ENCODE measurements at regions of chr5 and their contacts with region 1.

Region 1: DNA sequence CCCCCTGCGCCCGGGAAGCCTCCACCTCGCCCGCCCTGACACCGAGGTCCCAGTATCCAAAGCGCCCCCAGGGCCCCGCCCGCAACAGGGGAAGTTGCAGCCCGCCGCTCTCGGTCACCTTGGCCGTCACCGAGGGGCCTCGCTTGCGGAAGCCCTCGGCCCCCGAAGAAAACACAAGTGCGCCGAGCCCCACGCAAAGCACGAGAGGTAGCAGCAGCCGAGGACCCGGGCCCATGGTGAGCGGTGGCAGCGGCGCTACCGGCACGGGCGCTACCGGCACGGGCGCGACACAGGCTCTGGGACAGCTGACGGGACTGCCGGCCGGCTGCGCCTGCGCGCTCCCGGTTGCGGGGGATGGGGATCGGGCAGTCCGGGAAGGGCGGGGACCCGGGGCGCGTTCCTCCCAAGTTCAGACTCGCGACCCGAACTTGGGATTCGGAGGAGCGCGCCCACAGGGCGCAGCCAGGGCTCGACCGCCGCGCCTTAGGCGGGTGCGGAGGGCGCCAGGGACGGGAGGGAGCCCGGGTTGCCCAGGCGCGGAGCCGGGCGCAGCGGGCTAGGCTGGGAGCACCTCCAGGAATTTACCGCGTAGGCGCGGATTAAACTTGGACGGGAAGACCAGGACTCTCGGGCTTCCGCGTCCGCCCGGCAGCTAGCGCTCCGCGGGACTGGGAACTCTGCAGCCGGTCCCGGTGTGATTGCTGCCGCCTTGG is at the start of gene PPIC:
- DNase-seq: peak; percentile 88
- H3K4me3 ChIP-seq: peak within 1 kb of the TSS; percentile 91
- H3K27ac ChIP-seq: peak within 1 kb of the TSS; percentile 70
- H3K4me1 ChIP-seq: peaks cover 7% of the 10 kb centered on the region; the same call in 1 of the 2 replicates
- H3K27me3 ChIP-seq: no peaks in the 10 kb centered on the region
- total RNA-seq, gene PPIC: 116 and 128 TPM in 2 replicates

Region 2: GRCh38 chr5:123157791-123158581 is 121.4 kb after region 1 on chr5:
- in situ Hi-C with region 1: loop called (anchors 10 kb)
- DNase-seq: peak; percentile 63
- H3K4me3 ChIP-seq: peak overlapping the region; percentile 56
- H3K27ac ChIP-seq: no peak overlapping the region
- H3K4me1 ChIP-seq: peaks cover 21% of the 10 kb centered on the region
- H3K27me3 ChIP-seq: peaks cover 24% of the 10 kb centered on the region; the same call in 1 of the 2 replicates

Region 3: DNA sequence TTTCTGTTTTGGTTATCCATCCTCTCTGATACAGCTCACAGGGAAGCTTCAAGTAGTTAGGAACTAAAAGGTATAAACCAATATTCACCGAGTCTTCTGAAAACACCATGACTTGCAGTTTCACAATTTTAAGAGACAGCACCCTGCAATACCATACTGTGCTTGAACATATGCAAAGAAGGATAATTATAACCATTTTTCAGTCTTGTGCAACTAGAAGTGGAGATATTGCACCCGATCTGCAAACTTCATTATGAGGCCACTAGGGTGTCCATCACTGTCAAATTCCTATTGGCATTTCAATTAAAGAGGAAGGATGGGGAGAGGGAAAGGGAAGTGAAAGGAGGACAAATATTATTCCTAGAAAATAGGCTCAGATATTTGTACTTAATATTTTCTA is 419.1 kb after region 1 on chr5:
- in situ Hi-C with region 1: no loop called
- DNase-seq: no peak
- H3K4me3 ChIP-seq: no peak overlapping the region
- H3K27ac ChIP-seq: no peak overlapping the region
- H3K4me1 ChIP-seq: no peaks in the 10 kb centered on the region
- H3K27me3 ChIP-seq: no peaks in the 10 kb centered on the region

Measured in GM23248 (cell line).